MCF 10A (cell line): ENCODE measurements at regions of chr1 and their contacts with region 1.

Region 1: DNA sequence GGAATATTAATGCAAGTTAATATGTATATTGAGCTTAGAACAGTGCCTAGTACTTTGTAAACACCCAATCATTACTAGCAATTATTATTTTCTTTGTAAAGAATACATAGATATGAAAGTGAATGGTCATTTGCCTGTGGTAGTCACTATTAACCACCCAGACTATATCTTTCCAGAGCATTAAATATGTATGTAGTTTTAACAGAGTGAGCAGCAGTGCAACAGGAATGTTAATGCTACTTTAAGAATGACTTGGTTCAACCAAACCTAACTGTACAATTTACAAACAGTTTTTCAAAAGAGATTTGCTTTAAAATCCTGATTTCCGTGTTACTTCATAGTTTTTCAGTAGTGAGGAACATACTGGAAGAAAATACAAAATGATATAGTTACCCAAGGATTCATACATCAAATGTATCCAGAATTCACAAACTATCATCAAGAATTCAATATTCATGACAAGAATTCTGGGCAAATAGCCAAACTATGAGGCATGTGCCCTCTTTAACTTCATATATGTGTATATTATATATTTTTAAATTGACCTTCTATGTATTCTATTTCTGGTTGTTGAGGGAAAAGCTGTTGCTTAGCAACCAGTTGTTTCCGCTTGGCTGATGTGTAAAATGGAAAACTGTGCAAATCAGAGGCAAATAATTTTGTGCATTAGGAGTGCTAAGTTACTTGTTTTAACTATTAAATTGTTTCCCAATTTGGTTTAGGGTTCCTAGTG is 34.9 kb upstream of the IVNS1ABP start:
- DNase-seq: no peak
- H3K4me3 Mint-ChIP-seq: no peak overlapping the region
- H3K27ac Mint-ChIP-seq: no peak overlapping the region
- H3K4me1 Mint-ChIP-seq: peaks cover 29% of the 10 kb centered on the region
- H3K27me3 Mint-ChIP-seq: no peaks in the 10 kb centered on the region
- CTCF ChIP-seq: no peak

Region 2: DNA sequence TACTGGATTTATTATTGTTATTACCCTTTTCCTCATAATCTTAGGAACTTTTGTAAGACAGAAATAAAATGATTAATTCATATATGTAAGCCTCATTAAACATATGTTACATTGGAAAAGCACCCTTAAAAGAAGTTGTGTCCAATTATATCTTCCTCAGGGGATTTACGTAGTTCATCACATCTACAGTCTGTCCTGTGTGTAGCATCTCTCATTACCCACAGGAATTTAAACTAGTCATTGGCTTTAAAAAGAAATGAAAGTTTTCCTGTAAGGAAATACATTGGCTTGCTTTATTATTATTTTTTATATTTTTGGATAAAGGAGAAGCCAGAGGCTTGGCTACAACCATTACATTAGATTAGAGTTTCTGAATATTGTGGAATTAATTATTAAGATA is 138.8 kb before region 1 on chr1:
- CTCF ChIA-PET with region 1: no interaction called
- POLR2A ChIA-PET with region 1: no interaction called
- intact Hi-C with region 1: no loop called
- DNase-seq: no peak
- H3K4me3 Mint-ChIP-seq: no peak overlapping the region
- H3K27ac Mint-ChIP-seq: no peak overlapping the region
- H3K4me1 Mint-ChIP-seq: peaks cover 8% of the 10 kb centered on the region
- H3K27me3 Mint-ChIP-seq: no peaks in the 10 kb centered on the region
- CTCF ChIP-seq: no peak

Region 3: DNA sequence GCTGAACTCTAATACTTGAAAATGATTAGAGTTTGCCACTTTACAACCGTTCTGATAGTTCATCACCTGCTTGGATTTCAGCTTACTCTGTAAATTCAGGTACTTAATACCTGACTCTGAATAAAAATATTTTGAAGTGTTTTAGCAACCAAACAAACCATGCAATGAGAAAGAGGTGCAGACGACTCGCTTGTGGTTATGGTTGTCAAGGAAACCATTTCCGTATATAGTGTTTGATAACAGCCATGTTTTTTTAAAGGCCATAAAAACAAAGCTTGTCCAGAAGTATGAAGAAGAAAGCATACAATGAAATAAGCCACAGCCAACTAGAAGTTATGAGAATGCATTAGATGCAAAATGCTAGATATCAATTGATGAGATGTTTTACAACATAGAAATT is 215.1 kb after region 1 on chr1:
- CTCF ChIA-PET with region 1: no interaction called
- POLR2A ChIA-PET with region 1: interaction called, 11 read pairs
- intact Hi-C with region 1: no loop called
- DNase-seq: peak; percentile 77
- H3K4me3 Mint-ChIP-seq: no peak overlapping the region
- H3K27ac Mint-ChIP-seq: peak overlapping the region; percentile 96
- H3K4me1 Mint-ChIP-seq: peaks cover 53% of the 10 kb centered on the region
- H3K27me3 Mint-ChIP-seq: no peaks in the 10 kb centered on the region
- CTCF ChIP-seq: no peak